Vagina (tissue), 2 donors: ENCODE measurements at regions of chr1 and their contacts with region 1.

Region 1: GRCh38 chr1:118949315-118949714 is 38.8 kb downstream of the TBX15 start:
- DNase-seq: no peak
- H3K4me3 ChIP-seq: no peak overlapping the region
- H3K27ac ChIP-seq: no peak overlapping the region
- H3K4me1 ChIP-seq: no peaks in the 10 kb centered on the region
- H3K27me3 ChIP-seq: no peaks in the 10 kb centered on the region
- CTCF ChIP-seq: no peak
- POLR2A ChIP-seq: no peak

Region 2: DNA sequence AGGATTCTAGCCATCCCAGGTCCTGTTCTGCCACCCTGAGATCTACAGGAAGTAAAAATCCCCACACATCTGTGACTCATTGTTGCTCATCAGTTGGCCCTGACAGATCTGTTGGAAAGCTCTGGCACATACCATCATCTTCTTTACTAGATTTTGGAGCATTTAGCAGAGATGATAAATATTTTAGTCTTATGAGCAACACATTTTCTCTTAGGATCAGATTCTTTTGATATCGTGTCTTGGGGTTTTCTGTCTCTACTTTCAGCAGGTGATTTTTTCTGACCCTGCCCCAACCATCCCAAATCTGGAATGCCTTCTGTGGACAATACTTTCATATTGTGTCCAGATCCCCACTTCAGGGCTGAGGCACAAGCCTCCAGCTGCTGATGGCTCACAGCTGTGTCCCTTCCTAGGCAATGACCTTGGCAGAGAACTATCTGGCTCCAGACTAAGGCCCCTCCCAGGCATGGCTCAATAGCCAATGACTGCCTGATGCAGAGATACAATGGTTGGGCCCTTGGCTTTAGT is 1122.7 kb before region 1 on chr1:
- intact Hi-C with region 1: loop called (anchors 5 kb)
- DNase-seq: peak in 1 of 2 donors; percentile 87
- H3K4me3 ChIP-seq: no peak overlapping the region
- H3K27ac ChIP-seq: peak overlapping the region; percentile 80
- H3K4me1 ChIP-seq: peaks cover 48% of the 10 kb centered on the region
- H3K27me3 ChIP-seq: no peaks in the 10 kb centered on the region
- CTCF ChIP-seq: no peak
- POLR2A ChIP-seq: no peak

Region 3: GRCh38 chr1:118271883-118272282 is 677.4 kb before region 1 on chr1:
- intact Hi-C with region 1: loop called (anchors 5 kb)
- DNase-seq: no peak
- H3K4me3 ChIP-seq: no peak overlapping the region
- H3K27ac ChIP-seq: no peak overlapping the region
- H3K4me1 ChIP-seq: no peaks in the 10 kb centered on the region
- H3K27me3 ChIP-seq: no peaks in the 10 kb centered on the region
- CTCF ChIP-seq: no peak
- POLR2A ChIP-seq: no peak